ENCODE measurements at regions of chr17 and their contacts with region 1.

Region 1: GRCh38 chr17:32783602-32784001 is 93.3 kb downstream of the MYO1D start:
- DNase-seq: no peak
- ATAC-seq: peak in 2 of 4 donors; percentile 42 to 61
- H3K4me3 ChIP-seq: no peak overlapping the region
- H3K27ac ChIP-seq: no peak overlapping the region
- H3K4me1 ChIP-seq: no peaks in the 10 kb centered on the region
- H3K27me3 ChIP-seq: no peaks in the 10 kb centered on the region
- CTCF ChIP-seq: peak; percentile 74 to 91 (median 78)
- POLR2A ChIP-seq: no peak

Region 2: GRCh38 chr17:32870027-32870670 is 86.5 kb after region 1 on chr17:
- intact Hi-C with region 1: loop called in 1 of 10 experiments (anchors 5 kb)
- DNase-seq: peak in 3 of 5 donors; percentile 23 to 39 (median 34)
- ATAC-seq: peak; percentile 59 to 77 (median 72)
- H3K4me3 ChIP-seq: no peak overlapping the region
- H3K27ac ChIP-seq: peak overlapping the region; percentile 10 to 79 (median 53)
- H3K4me1 ChIP-seq: peaks cover 0 to 58% (median 27%) of the 10 kb centered on the region in 12 donors
- H3K27me3 ChIP-seq: no peaks in the 10 kb centered on the region
- CTCF ChIP-seq: no peak
- POLR2A ChIP-seq: no peak

Region 3: DNA sequence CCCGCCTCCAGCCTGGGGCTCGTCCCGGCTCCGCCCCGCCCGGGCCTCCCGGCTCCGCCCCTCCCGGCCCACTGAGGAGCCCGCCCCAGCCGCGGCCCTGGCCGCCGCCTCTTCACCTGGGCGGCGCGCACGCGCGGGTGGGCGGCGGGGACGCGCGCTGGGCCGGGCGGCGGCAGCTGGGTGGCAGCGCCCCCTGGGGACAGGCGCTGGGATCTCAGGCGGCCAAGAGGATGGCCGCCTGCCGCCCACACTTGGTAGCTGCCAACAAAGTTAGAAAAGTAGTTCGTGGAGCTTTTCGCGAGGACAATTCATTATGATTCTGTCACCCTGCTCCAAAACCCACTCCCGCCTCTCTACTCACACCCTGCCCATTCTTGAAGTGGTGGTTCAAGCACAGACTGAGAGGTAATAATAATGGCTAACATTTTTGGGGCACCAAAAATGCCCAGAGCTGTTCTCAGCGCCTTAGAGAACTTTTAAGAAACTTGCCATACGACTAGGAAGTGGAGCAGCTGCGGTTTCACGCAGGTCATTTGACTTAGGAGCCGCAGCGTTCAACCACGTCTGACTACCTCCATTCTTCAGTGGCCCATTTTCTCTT is 93.7 kb after region 1 on chr17:
- intact Hi-C with region 1: loop called (anchors 1 to 5 kb)
- DNase-seq: peak; percentile 90 to 96 (median 93)
- ATAC-seq: peak; percentile 96 to 100 (median 100)
- H3K4me3 ChIP-seq: peak overlapping the region in 11 of 12 donors; percentile 71 to 93 (median 80)
- H3K27ac ChIP-seq: peak overlapping the region in 11 of 12 donors; percentile 61 to 90 (median 81)
- H3K4me1 ChIP-seq: peaks cover 0 to 27% (median 9%) of the 10 kb centered on the region in 12 donors
- H3K27me3 ChIP-seq: peaks cover 0 to 5% (median 0%) of the 10 kb centered on the region in 9 donors
- CTCF ChIP-seq: peak; percentile 64 to 96 (median 85)
- POLR2A ChIP-seq: no peak

Region 4: GRCh38 chr17:32909787-32910369 is 126.3 kb after region 1 on chr17:
- intact Hi-C with region 1: loop called (anchors 1 to 10 kb)
- DNase-seq: peak in 4 of 5 donors; percentile 57 to 71 (median 64)
- ATAC-seq: peak; percentile 72 to 89 (median 74)
- H3K4me3 ChIP-seq: no peak overlapping the region
- H3K27ac ChIP-seq: no peak overlapping the region
- H3K4me1 ChIP-seq: peaks cover 0 to 8% (median 0%) of the 10 kb centered on the region in 12 donors
- H3K27me3 ChIP-seq: no peaks in the 10 kb centered on the region
- CTCF ChIP-seq: peak; percentile 61 to 80 (median 72)
- POLR2A ChIP-seq: no peak

Region 5: GRCh38 chr17:32927724-32928585 is 144.4 kb after region 1 on chr17 and contains the start of gene TMEM98:
- intact Hi-C with region 1: no loop called
- DNase-seq: peak in 2 of 5 donors; percentile 24 to 50
- ATAC-seq: peak in 3 of 4 donors; percentile 37 to 73 (median 67)
- H3K4me3 ChIP-seq: peak within 1 kb of the TSS; percentile 43 to 82 (median 62)
- H3K27ac ChIP-seq: peak within 1 kb of the TSS in 7 of 12 donors; percentile 30 to 64 (median 51)
- H3K4me1 ChIP-seq: peaks cover 0 to 13% (median 2%) of the 10 kb centered on the region in 12 donors
- H3K27me3 ChIP-seq: peaks cover 0 to 27% (median 2%) of the 10 kb centered on the region in 9 donors
- CTCF ChIP-seq: no peak
- POLR2A ChIP-seq: no peak
- total RNA-seq, gene TMEM98: 6.1 to 35.8 (median 13.3) TPM

Region 6: DNA sequence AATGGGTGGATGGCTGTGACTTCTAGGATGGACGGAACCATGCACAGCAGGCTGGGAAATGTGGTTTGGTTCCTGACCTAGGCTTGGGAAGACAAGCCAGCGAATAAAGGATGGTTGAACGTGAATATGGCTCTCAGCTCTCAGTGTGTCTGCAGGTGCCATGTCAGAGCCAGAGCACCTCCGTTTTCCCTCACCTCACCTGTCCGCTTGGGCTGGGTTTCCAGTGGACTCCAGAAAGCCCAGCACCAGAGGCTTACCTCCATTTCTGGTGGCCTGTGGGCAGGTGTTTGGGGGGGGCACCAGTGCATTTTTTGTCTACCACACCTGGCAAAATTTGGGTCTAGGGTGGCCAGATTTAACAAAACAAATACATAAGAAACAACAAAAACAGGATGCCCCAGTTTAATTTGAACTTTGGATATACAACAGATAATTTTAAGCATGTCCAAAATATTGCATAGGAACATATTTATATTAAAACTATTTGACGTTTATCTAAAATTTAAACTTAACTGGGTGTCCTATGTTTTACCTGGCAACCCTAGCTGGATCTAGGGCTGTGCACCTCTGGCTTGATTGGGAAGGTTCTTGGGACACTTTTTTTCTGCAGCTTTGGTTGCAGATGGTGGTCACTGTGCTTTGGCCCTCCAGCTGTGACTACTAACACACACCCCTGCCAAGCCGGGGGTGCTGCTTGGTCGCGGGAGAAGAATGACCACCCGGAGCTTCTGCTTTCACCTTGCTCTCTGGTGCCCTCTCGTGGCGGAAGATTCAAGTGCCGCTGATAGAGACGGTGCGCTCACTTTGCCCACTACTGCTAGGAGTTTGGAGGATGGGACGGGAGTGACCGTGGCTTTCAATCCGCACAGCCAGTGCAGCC is 214.4 kb after region 1 on chr17:
- intact Hi-C with region 1: loop called in 4 of 10 experiments (anchors 5 kb)
- DNase-seq: peak; percentile 60 to 82 (median 73)
- ATAC-seq: peak in 3 of 4 donors; percentile 56 to 84 (median 67)
- H3K4me3 ChIP-seq: no peak overlapping the region
- H3K27ac ChIP-seq: no peak overlapping the region
- H3K4me1 ChIP-seq: peaks cover 0 to 7% (median 0%) of the 10 kb centered on the region in 12 donors
- H3K27me3 ChIP-seq: peaks cover 0 to 38% (median 3%) of the 10 kb centered on the region in 9 donors
- CTCF ChIP-seq: peak; percentile 75 to 92 (median 85)
- POLR2A ChIP-seq: no peak

Region 7: DNA sequence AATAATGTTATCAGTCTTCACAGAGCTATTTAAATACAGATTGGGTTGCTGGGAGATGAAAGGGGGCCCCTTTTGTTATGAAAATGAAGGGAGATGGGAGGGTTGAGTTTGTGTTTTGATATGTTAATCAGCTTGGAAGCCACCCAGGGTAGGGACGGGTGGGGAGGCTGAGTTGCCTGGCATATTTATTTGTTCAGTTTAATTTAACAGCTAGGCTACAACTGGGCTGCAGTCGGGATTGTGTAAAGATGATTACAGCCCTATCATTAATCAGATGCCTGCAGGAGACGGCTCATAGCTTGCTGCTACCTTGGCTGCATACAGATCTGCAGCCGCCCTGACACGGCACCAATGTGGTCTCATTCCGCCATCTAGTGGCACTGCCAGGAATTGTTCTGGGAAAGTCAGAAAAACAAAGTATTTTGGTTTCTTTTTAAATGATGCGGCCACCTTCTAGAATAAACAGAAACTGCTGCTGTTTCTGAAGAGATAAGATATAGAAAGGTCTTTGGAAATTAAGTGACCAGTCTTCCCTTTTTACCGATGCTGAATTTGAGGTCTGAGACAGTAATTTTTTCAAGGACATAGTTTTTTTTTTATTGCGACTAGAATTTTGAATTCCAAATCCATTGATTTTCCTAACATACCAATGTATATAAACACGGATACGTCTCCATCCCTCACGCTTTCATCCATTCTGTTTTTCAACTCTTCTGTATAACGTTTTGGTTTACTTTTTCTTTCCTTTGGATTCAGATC is 967.5 kb after region 1 on chr17:
- intact Hi-C with region 1: loop called in 2 of 10 experiments (anchors 10 kb)
- DNase-seq: peak; percentile 41 to 68 (median 53)
- ATAC-seq: peak; percentile 58 to 83 (median 74)
- H3K4me3 ChIP-seq: peak overlapping the region in 4 of 12 donors; percentile 8 to 47 (median 25)
- H3K27ac ChIP-seq: no peak overlapping the region
- H3K4me1 ChIP-seq: peaks cover 0 to 4% (median 0%) of the 10 kb centered on the region in 12 donors
- H3K27me3 ChIP-seq: peaks cover 0 to 40% (median 11%) of the 10 kb centered on the region in 9 donors
- CTCF ChIP-seq: peak; percentile 87 to 99 (median 94)
- POLR2A ChIP-seq: no peak

Measured in heart left ventricle (tissue), 16 donors.